Activated T-helper 1 cell treated with anti-CD3 and anti-CD28 coated beads, Interleukin-12 subunit alpha, Interleukin-12 subunit beta, Interleukin-2, Interleukin-4 antibody, amounts not matched to agents 30 ng/mL and 10 ng/mL and 1 ng/mL, durations not matched to agents 14 hours and 24 hours and 36 hours (primary cell): ENCODE measurements at regions of chr2 and their contacts with region 1.

Region 1: GRCh38 chr2:8408560-8409460 is 273.0 kb upstream of the ID2 start:
- DNase-seq: peak; percentile 49
- H3K4me3 Mint-ChIP-seq: peak overlapping the region; percentile 1
- H3K27ac Mint-ChIP-seq: peak overlapping the region; percentile 80
- H3K4me1 Mint-ChIP-seq: peaks cover 19% of the 10 kb centered on the region
- H3K27me3 Mint-ChIP-seq: peaks cover 15% of the 10 kb centered on the region

Region 2: GRCh38 chr2:7530001-7530400 is 878.8 kb before region 1 on chr2:
- intact Hi-C with region 1: loop called (anchors 1 kb)
- DNase-seq: no peak
- H3K4me3 Mint-ChIP-seq: no peak overlapping the region
- H3K27ac Mint-ChIP-seq: peak overlapping the region; percentile 71
- H3K4me1 Mint-ChIP-seq: peaks cover 64% of the 10 kb centered on the region
- H3K27me3 Mint-ChIP-seq: no peaks in the 10 kb centered on the region

Region 3: GRCh38 chr2:7725171-7725849 is 683.5 kb before region 1 on chr2:
- intact Hi-C with region 1: loop called (anchors 2 kb)
- DNase-seq: peak; percentile 64
- H3K4me3 Mint-ChIP-seq: peak overlapping the region; percentile 87
- H3K27ac Mint-ChIP-seq: peak overlapping the region; percentile 95
- H3K4me1 Mint-ChIP-seq: peaks cover 73% of the 10 kb centered on the region
- H3K27me3 Mint-ChIP-seq: no peaks in the 10 kb centered on the region

Region 4: GRCh38 chr2:7984693-7985353 is 424.0 kb before region 1 on chr2:
- intact Hi-C with region 1: loop called (anchors 1 kb)
- DNase-seq: no peak
- H3K4me3 Mint-ChIP-seq: peak overlapping the region; percentile 12
- H3K27ac Mint-ChIP-seq: peak overlapping the region; percentile 82
- H3K4me1 Mint-ChIP-seq: peaks cover 28% of the 10 kb centered on the region
- H3K27me3 Mint-ChIP-seq: no peaks in the 10 kb centered on the region

Region 5: GRCh38 chr2:8162552-8162951 is 246.3 kb before region 1 on chr2:
- intact Hi-C with region 1: no loop called
- DNase-seq: no peak
- H3K4me3 Mint-ChIP-seq: no peak overlapping the region
- H3K27ac Mint-ChIP-seq: no peak overlapping the region
- H3K4me1 Mint-ChIP-seq: no peaks in the 10 kb centered on the region
- H3K27me3 Mint-ChIP-seq: no peaks in the 10 kb centered on the region

Region 6: GRCh38 chr2:8303322-8303832 is 105.4 kb before region 1 on chr2:
- intact Hi-C with region 1: loop called (anchors 1 kb)
- DNase-seq: peak; percentile 77
- H3K4me3 Mint-ChIP-seq: peak overlapping the region; percentile 65
- H3K27ac Mint-ChIP-seq: peak overlapping the region; percentile 85
- H3K4me1 Mint-ChIP-seq: peaks cover 91% of the 10 kb centered on the region
- H3K27me3 Mint-ChIP-seq: peaks cover 7% of the 10 kb centered on the region

Region 7: GRCh38 chr2:8477552-8478470 is 69.0 kb after region 1 on chr2:
- intact Hi-C with region 1: loop called (anchors 2 kb)
- DNase-seq: no peak
- H3K4me3 Mint-ChIP-seq: peak overlapping the region; percentile 31
- H3K27ac Mint-ChIP-seq: peak overlapping the region; percentile 76
- H3K4me1 Mint-ChIP-seq: peaks cover 97% of the 10 kb centered on the region
- H3K27me3 Mint-ChIP-seq: no peaks in the 10 kb centered on the region